ENCODE measurements at regions of chr2 and their contacts with region 1.

Region 1: GRCh38 chr2:2121887-2122286 is 209.2 kb downstream of the MYT1L start:
- DNase-seq: no peak
- H3K4me3 ChIP-seq: no peak overlapping the region
- H3K27ac ChIP-seq: no peak overlapping the region; a peak in 1 of 4 replicates
- H3K4me1 ChIP-seq: peaks cover 0 to 17% of the 10 kb centered on the region in 2 experiments; a peak in 2 of 4 replicates
- H3K27me3 ChIP-seq: no peaks in the 10 kb centered on the region
- CTCF ChIP-seq: no peak
- EP300 ChIP-seq: no peak
- RAD21 ChIP-seq: no peak

Region 2: GRCh38 chr2:1940679-1941078 is 181.2 kb before region 1 on chr2:
- CTCF ChIA-PET with region 1: no interaction called
- POLR2A ChIA-PET with region 1: no interaction called
- DNase-seq: peak; percentile 87
- H3K4me3 ChIP-seq: no peak overlapping the region
- H3K27ac ChIP-seq: peak overlapping the region in 1 of 2 experiments; percentile 11; a peak in 2 of 4 replicates
- H3K4me1 ChIP-seq: peaks cover 0 to 14% of the 10 kb centered on the region in 2 experiments; a peak in 2 of 4 replicates
- H3K27me3 ChIP-seq: no peaks in the 10 kb centered on the region
- CTCF ChIP-seq: no peak
- EP300 ChIP-seq: no peak
- RAD21 ChIP-seq: peak; percentile 53

Region 3: DNA sequence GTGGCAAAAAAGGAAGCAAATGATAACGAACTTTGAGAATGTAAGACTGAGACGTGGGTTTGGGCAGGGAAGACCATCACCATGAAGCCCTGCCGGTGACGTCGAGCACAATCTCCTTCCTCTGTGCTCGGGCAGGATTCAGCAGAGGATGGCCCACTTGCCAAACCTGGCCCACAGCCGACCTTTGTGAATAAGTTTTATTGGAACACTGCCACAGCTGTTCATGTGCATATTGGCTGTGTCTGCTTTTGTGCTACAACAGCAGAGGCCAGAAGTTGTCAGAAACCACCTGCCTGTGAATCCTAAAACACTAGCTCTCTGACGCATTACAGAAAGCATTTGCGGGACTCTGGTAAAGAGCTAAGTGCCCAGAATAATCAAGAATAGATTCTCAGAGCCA is 14.7 kb before region 1 on chr2:
- CTCF ChIA-PET with region 1: interaction called, 39 read pairs
- POLR2A ChIA-PET with region 1: no interaction called
- DNase-seq: peak; percentile 58
- H3K4me3 ChIP-seq: no peak overlapping the region
- H3K27ac ChIP-seq: peak overlapping the region in 1 of 2 experiments; percentile 97; a peak in 2 of 4 replicates
- H3K4me1 ChIP-seq: peaks cover 0 to 79% of the 10 kb centered on the region in 2 experiments; a peak in 2 of 4 replicates
- H3K27me3 ChIP-seq: no peaks in the 10 kb centered on the region
- CTCF ChIP-seq: no peak
- EP300 ChIP-seq: peak in 1 of 2 experiments; percentile 64; a peak in 1 of 4 replicates
- RAD21 ChIP-seq: peak; percentile 47

Region 4: DNA sequence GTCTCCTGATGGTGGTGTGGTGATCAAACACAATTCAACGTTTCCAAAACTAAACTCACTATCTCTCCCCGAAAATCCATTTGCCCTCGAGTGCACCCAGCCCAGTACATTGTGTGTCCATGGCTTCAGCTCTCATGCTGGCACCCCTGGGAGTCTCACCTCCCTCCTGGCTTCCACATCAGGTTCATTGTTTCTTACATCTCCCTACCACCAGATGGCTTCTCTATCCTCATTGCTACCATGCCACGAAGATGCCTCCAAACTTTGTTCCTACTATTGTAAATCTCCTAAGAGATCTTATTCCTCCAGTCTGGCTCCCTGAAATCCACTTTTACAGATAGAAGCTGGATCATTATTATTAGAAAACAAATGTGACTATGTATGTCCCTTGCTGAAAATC is 12.2 kb after region 1 on chr2:
- CTCF ChIA-PET with region 1: interaction called, 24 read pairs
- POLR2A ChIA-PET with region 1: no interaction called
- DNase-seq: no peak
- H3K4me3 ChIP-seq: no peak overlapping the region
- H3K27ac ChIP-seq: no peak overlapping the region
- H3K4me1 ChIP-seq: peaks cover 0 to 2% of the 10 kb centered on the region in 2 experiments; a peak in 1 of 4 replicates
- H3K27me3 ChIP-seq: no peaks in the 10 kb centered on the region
- CTCF ChIP-seq: no peak
- EP300 ChIP-seq: no peak
- RAD21 ChIP-seq: peak; percentile 36; the same call in 1 of the 2 replicates

Measured in SK-N-SH (cell line).